WTC11 (cell line): ENCODE measurements at regions of chrX and their contacts with region 1.

Region 1: DNA sequence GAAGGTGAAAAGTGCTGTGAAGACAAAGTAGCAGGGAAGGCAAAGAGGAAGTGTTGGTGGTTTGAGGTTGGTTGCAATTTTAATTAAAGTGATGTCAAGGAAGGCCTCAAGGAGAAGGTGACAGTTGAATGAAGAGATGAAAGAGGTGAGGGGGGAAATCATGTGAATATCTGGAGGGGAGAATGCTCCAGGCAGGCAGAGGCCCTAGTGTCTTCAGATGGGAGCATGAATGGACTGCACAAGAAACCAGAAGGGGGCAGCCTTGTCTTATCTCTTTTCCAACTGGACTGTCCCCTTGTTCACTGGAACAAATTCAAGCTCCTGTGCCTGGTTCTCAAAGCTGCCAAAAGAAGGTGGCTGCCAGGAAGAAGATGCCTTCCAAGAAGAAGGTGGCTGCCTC is 68.4 kb downstream of the MAOB start:
- DNase-seq: peak; percentile 36
- ATAC-seq: peak; percentile 72; the same call in 1 of the 2 replicates
- H3K4me3 Mint-ChIP-seq: no peak overlapping the region
- H3K27ac Mint-ChIP-seq: no peak overlapping the region
- H3K4me1 Mint-ChIP-seq: no peaks in the 10 kb centered on the region
- H3K27me3 Mint-ChIP-seq: no peaks in the 10 kb centered on the region
- CTCF ChIP-seq: no peak

Region 2: GRCh38 chrX:43595931-43596330 is 218.0 kb before region 1 on chrX:
- CTCF ChIA-PET with region 1: no interaction called
- POLR2A ChIA-PET with region 1: no interaction called
- DNase-seq: no peak
- ATAC-seq: no peak
- H3K4me3 Mint-ChIP-seq: no peak overlapping the region
- H3K27ac Mint-ChIP-seq: no peak overlapping the region
- H3K4me1 Mint-ChIP-seq: no peaks in the 10 kb centered on the region
- H3K27me3 Mint-ChIP-seq: no peaks in the 10 kb centered on the region
- CTCF ChIP-seq: no peak

Region 3: DNA sequence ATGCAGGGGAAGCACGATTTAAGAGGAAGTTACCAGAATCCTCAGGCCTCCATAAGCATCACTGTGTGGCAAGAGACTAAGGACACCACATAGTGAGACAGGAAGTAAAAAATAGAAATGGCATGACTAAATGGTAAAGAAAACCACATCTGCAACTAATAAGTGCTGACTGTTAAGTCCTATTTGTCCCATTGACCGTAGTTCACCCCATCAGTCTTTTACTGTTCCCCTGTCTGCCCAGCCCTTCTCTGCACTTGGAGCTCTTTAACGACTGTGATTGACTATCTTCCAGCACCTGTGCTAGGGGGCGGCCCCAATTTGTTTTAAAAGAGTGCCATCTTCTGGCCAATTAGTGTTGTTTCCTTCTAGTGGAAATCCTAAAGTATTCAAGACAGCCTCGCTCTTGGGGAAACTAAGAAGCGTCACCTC is 63.6 kb before region 1 on chrX:
- CTCF ChIA-PET with region 1: no interaction called
- POLR2A ChIA-PET with region 1: no interaction called
- DNase-seq: peak; percentile 33
- ATAC-seq: peak; percentile 80
- H3K4me3 Mint-ChIP-seq: no peak overlapping the region
- H3K27ac Mint-ChIP-seq: no peak overlapping the region
- H3K4me1 Mint-ChIP-seq: no peaks in the 10 kb centered on the region
- H3K27me3 Mint-ChIP-seq: no peaks in the 10 kb centered on the region; the same call in 1 of the 2 replicates
- CTCF ChIP-seq: no peak

Region 4: DNA sequence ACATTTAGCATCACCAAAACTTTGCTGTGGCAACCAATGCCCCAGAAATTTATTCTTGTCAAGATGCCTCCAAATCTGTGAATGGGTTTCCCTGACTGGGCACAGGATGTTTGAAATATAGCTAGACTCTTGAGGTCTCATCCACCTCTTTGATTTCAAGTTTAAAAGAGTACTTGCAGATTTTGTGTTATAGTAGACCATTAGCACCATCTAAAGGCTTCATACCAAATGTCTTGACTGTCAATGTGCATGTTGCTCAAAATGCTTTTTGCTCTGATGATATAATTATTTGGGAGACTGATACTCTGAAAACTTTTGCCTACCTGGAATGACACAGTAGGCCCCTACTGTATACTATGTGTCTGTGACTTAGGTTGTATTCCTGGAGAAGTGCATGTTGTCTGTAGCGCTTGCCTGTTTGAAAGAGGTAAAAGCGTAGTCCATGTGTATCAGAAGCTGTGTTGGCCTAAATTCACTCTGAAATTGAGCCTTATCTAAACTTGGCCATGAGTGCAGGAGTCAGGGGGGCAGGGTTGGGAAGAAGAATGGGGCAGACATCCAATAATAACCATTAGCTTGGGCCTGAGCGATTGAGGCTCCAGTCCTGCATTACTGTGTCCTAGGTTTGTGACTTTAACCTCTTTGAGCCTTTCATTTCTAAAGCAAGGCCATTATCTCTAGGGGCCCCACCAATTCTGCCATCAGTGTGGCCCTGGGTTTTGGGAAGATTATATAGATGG is 125.5 kb after region 1 on chrX:
- CTCF ChIA-PET with region 1: interaction called, 11 read pairs
- POLR2A ChIA-PET with region 1: no interaction called
- DNase-seq: no peak
- ATAC-seq: no peak
- H3K4me3 Mint-ChIP-seq: no peak overlapping the region
- H3K27ac Mint-ChIP-seq: no peak overlapping the region
- H3K4me1 Mint-ChIP-seq: peaks cover 20% of the 10 kb centered on the region
- H3K27me3 Mint-ChIP-seq: no peaks in the 10 kb centered on the region
- CTCF ChIP-seq: no peak